IMR-90 (cell line): ENCODE measurements at regions of chr15 and their contacts with region 1.

Region 1: GRCh38 chr15:51982013-51982769 is 10.6 kb upstream of the LEO1 start:
- DNase-seq: peak; percentile 82
- ATAC-seq: peak; percentile 89
- H3K4me3 ChIP-seq: no peak overlapping the region
- H3K27ac ChIP-seq: peak overlapping the region; percentile 9; the same call in 1 of the 2 replicates
- H3K4me1 ChIP-seq: peaks cover 3% of the 10 kb centered on the region
- H3K27me3 ChIP-seq: no peaks in the 10 kb centered on the region
- CTCF ChIP-seq: peak; percentile 82
- POLR2A ChIP-seq: 0 out of 2 replicates have a peak, but pooled peaks have one; percentile 35
- RAD21 ChIP-seq: peak; percentile 90

Region 2: GRCh38 chr15:51955504-51956101 is 26.6 kb before region 1 on chr15:
- CTCF ChIA-PET with region 1: no interaction called
- POLR2A ChIA-PET with region 1: no interaction called
- dilution Hi-C with region 1: no loop called
- in situ Hi-C with region 1: no loop called
- intact Hi-C with region 1: no loop called
- DNase-seq: no peak
- ATAC-seq: no peak
- H3K4me3 ChIP-seq: no peak overlapping the region
- H3K27ac ChIP-seq: no peak overlapping the region
- H3K4me1 ChIP-seq: no peaks in the 10 kb centered on the region
- H3K27me3 ChIP-seq: no peaks in the 10 kb centered on the region
- CTCF ChIP-seq: no peak
- POLR2A ChIP-seq: no peak
- RAD21 ChIP-seq: no peak

Region 3: DNA sequence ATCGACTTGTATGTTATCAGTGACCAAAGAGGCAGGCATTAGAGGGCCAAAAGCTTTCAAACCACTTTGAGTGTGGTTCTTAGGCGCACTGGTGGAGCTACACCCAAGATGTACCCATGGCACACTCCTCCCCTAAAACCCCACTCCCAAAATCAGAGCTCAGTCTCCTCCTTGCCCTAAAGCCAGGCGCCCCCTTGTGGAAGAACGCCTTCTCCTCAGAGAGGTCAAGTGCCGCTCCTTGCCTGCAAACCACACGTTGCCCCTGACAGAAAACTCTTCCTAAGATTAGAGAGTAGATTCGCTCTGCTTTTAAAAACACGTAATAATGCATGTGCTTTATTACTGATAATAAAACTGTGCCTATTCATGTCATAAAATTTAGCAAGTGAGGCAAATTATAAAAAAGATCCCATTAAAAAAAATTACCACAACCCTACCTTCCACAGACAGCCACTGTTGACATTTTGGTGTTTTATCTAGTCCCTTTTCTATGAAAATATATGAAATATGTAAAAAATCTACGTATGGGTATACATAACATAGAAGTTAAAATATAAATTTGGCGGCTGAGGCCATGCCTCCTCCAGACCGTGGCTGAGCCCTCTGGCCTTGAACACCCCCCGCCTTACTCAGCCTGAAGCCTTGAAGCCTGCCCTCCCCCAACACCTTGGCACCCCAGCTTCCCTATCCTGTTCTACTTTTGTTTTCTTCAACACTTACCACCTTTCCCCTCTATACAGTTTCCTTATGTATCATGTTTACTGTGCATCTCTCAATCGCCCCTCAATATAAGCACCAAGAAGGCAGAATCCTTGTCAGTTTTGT is 96.9 kb after region 1 on chr15:
- CTCF ChIA-PET with region 1: interaction called, 3 read pairs
- POLR2A ChIA-PET with region 1: no interaction called
- dilution Hi-C with region 1: no loop called
- in situ Hi-C with region 1: no loop called
- intact Hi-C with region 1: loop called (anchors 1 kb)
- DNase-seq: peak; percentile 56
- ATAC-seq: peak; percentile 38
- H3K4me3 ChIP-seq: no peak overlapping the region
- H3K27ac ChIP-seq: no peak overlapping the region
- H3K4me1 ChIP-seq: peaks cover 16% of the 10 kb centered on the region
- H3K27me3 ChIP-seq: no peaks in the 10 kb centered on the region
- CTCF ChIP-seq: peak; percentile 71
- POLR2A ChIP-seq: no peak
- RAD21 ChIP-seq: peak; percentile 65

Region 4: GRCh38 chr15:52139599-52140491 is 157.7 kb after region 1 on chr15:
- CTCF ChIA-PET with region 1: interaction called, 7 read pairs
- POLR2A ChIA-PET with region 1: no interaction called
- dilution Hi-C with region 1: no loop called
- in situ Hi-C with region 1: no loop called
- intact Hi-C with region 1: loop called (anchors 1 kb)
- DNase-seq: peak; percentile 62
- ATAC-seq: peak; percentile 47
- H3K4me3 ChIP-seq: no peak overlapping the region
- H3K27ac ChIP-seq: no peak overlapping the region
- H3K4me1 ChIP-seq: peaks cover 21% of the 10 kb centered on the region
- H3K27me3 ChIP-seq: no peaks in the 10 kb centered on the region
- CTCF ChIP-seq: peak; percentile 80
- POLR2A ChIP-seq: no peak
- RAD21 ChIP-seq: peak; percentile 79

Region 5: GRCh38 chr15:52208306-52208946 is 226.2 kb after region 1 on chr15:
- CTCF ChIA-PET with region 1: interaction called, 3 read pairs
- POLR2A ChIA-PET with region 1: no interaction called
- dilution Hi-C with region 1: no loop called
- in situ Hi-C with region 1: loop called (anchors 10 kb)
- intact Hi-C with region 1: loop called (anchors 5 kb)
- DNase-seq: peak; percentile 67
- ATAC-seq: peak; percentile 88
- H3K4me3 ChIP-seq: no peak overlapping the region
- H3K27ac ChIP-seq: no peak overlapping the region
- H3K4me1 ChIP-seq: no peaks in the 10 kb centered on the region
- H3K27me3 ChIP-seq: peaks cover 25% of the 10 kb centered on the region
- CTCF ChIP-seq: peak; percentile 84
- POLR2A ChIP-seq: no peak
- RAD21 ChIP-seq: peak; percentile 63

Region 6: DNA sequence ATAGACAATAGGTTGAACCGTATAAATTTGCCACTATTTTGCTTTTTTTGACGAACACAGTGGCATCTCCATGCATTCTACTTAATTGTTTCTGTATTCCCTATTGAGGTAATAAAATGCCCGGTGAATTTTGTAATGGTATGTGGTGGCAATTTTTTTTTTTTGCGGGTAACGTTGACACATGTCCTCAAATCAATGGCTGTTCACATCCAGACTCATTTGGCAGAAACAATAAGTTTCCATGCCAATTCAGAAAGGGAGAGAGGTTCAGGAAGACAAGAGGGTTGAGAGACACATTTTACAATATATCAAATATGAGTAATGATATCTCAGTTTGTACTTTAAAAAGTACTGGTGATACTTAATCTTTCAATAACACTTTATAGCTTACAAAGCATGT is 1313.4 kb after region 1 on chr15:
- CTCF ChIA-PET with region 1: no interaction called
- POLR2A ChIA-PET with region 1: no interaction called
- dilution Hi-C with region 1: no loop called
- in situ Hi-C with region 1: no loop called
- intact Hi-C with region 1: no loop called
- DNase-seq: no peak
- ATAC-seq: no peak
- H3K4me3 ChIP-seq: no peak overlapping the region
- H3K27ac ChIP-seq: no peak overlapping the region
- H3K4me1 ChIP-seq: no peaks in the 10 kb centered on the region
- H3K27me3 ChIP-seq: no peaks in the 10 kb centered on the region
- CTCF ChIP-seq: no peak
- POLR2A ChIP-seq: no peak
- RAD21 ChIP-seq: no peak